CD4-positive, alpha-beta T cell (primary cell): ENCODE measurements at regions of chr3 and their contacts with region 1.

Region 1: DNA sequence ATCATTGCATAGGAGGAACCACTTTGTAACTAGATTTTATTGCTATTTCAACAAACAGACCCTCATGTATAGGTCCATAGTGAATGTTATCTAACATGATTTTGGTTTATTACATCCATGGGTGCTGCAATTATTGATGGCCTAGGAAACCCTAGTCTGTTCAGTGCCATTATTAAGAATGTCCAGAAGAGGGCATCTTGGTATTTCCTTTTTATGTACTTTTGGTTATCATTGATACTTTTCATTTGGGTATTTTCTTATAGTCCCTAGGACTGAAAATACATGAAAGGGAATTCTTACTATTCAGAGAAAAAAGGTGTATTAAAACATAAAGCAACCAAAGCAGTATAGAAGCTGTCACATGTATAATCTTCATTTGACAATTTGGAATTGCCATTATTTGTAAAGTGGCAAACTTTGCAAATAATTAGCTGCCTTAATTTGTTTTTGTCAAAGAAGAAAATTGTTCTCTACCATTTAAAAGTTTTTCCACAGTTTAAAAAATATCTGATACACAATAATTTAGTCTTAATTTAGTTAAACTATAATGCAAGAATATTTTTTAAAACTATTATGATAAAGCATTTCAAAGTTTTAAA is 48.7 kb downstream of the CNOT10 start:
- DNase-seq: peak in 3 of 14 experiments; percentile 34 to 40 (median 39)
- ATAC-seq: no peak
- H3K4me3 ChIP-seq: no peak overlapping the region
- H3K4me3 Mint-ChIP-seq: no peak overlapping the region
- H3K27ac ChIP-seq: no peak overlapping the region
- H3K27ac Mint-ChIP-seq: no peak overlapping the region
- H3K4me1 ChIP-seq: no peaks in the 10 kb centered on the region
- H3K4me1 Mint-ChIP-seq: no peaks in the 10 kb centered on the region
- H3K27me3 ChIP-seq: no peaks in the 10 kb centered on the region
- H3K27me3 Mint-ChIP-seq: no peaks in the 10 kb centered on the region
- CTCF ChIP-seq: peak; percentile 47

Region 2: DNA sequence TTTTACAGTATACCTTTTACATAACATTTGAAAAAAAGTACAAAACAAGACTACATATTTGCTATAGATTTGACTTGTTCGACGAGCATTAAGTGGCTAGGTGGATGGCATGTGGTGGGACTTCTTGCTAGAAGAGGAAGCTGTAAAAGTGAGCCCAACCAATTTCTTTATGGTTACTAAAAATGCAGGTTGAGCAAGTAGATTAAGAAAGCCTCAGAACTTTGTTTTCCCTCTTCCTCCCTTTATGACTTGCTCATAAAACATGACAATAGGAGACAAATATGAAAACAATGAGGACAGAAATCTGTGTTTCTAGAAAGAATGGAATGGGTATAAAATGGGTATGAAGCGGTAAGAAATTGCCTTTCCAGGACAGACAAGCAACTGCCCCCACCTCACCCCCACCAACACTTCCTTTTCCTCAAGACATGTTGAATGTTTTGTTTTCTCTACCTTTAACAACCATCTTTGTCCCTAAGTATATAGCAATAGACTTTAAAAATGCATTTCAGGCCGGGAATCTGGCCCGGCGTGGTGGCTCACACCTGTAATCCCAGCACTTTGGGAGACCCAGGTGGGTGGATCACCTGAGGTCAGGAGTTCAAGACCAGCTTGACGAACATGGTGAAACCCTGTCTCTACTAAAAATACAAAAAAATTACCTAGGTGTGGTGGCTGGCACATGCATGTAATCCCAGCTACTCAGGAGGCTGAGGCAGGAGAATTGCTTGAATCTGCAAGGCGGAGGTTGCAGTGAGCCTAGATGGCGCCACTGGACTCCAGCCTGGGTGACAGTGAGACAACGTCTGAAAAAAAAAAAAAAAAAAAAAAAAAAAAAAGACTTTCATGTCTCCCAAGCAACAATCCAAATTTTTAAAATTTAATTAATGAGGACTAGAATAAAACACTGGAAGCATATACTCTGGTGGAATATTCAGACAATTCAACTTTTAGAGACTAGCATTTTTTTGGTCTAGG is 168.0 kb after region 1 on chr3:
- CTCF ChIA-PET with region 1: no interaction called
- POLR2A ChIA-PET with region 1: no interaction called
- intact Hi-C with region 1: loop called in 1 of 2 experiments (anchors 10 kb)
- DNase-seq: peak in 12 of 14 experiments; percentile 5 to 56 (median 24)
- ATAC-seq: no peak
- H3K4me3 ChIP-seq: peak overlapping the region; percentile 26
- H3K4me3 Mint-ChIP-seq: peak overlapping the region; percentile 31
- H3K27ac ChIP-seq: no peak overlapping the region
- H3K27ac Mint-ChIP-seq: no peak overlapping the region
- H3K4me1 ChIP-seq: no peaks in the 10 kb centered on the region
- H3K4me1 Mint-ChIP-seq: no peaks in the 10 kb centered on the region
- H3K27me3 ChIP-seq: no peaks in the 10 kb centered on the region
- H3K27me3 Mint-ChIP-seq: peaks cover 24% of the 10 kb centered on the region
- CTCF ChIP-seq: peak; percentile 51

Region 3: DNA sequence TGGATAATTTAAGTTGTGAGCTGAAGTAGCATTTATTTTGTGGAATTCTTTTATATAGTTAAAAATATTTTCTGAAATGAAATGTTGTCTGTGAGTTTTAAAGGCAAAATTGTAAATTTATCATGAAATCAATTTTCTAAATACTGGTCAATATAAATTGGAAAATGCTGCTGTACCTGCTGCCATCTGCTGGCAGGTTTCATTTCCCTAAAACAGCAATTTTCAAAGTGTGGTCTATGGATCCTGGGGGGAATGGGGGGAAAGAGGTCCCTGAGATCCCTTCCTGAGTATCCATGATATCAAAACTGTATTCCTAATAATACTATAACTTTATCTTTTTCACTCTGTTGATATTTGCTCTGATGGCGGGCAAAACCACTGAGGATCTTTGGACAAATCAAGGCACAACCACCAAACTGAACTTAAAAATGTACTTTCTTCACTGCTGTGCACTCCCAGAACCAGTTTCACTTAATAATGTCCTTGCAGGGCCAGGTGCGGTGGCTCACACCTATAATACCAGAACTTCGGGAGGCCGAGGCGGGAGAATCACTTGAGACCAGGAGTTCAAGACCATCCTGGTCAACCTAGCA is 200.5 kb after region 1 on chr3:
- CTCF ChIA-PET with region 1: no interaction called
- POLR2A ChIA-PET with region 1: no interaction called
- intact Hi-C with region 1: loop called (anchors 2 to 10 kb)
- DNase-seq: peak in 4 of 14 experiments; percentile 23 to 51 (median 42)
- ATAC-seq: no peak
- H3K4me3 ChIP-seq: no peak overlapping the region
- H3K4me3 Mint-ChIP-seq: no peak overlapping the region
- H3K27ac ChIP-seq: no peak overlapping the region
- H3K27ac Mint-ChIP-seq: no peak overlapping the region
- H3K4me1 ChIP-seq: no peaks in the 10 kb centered on the region
- H3K4me1 Mint-ChIP-seq: no peaks in the 10 kb centered on the region
- H3K27me3 ChIP-seq: peaks cover 0 to 4% of the 10 kb centered on the region in 2 experiments
- H3K27me3 Mint-ChIP-seq: peaks cover 16% of the 10 kb centered on the region
- CTCF ChIP-seq: peak; percentile 70

Region 4: GRCh38 chr3:33149342-33149741 is 415.6 kb after region 1 on chr3:
- CTCF ChIA-PET with region 1: no interaction called
- POLR2A ChIA-PET with region 1: no interaction called
- intact Hi-C with region 1: no loop called
- DNase-seq: peak in 1 of 14 experiments; percentile 22
- ATAC-seq: no peak
- H3K4me3 ChIP-seq: no peak overlapping the region
- H3K4me3 Mint-ChIP-seq: no peak overlapping the region
- H3K27ac ChIP-seq: no peak overlapping the region
- H3K27ac Mint-ChIP-seq: no peak overlapping the region
- H3K4me1 ChIP-seq: no peaks in the 10 kb centered on the region
- H3K4me1 Mint-ChIP-seq: no peaks in the 10 kb centered on the region
- H3K27me3 ChIP-seq: peaks cover 0 to 6% of the 10 kb centered on the region in 2 experiments
- H3K27me3 Mint-ChIP-seq: peaks cover 15% of the 10 kb centered on the region
- CTCF ChIP-seq: no peak

Region 5: GRCh38 chr3:33372218-33373081 is 638.7 kb after region 1 on chr3:
- CTCF ChIA-PET with region 1: no interaction called
- POLR2A ChIA-PET with region 1: no interaction called
- intact Hi-C with region 1: loop called in 1 of 2 experiments (anchors 10 kb)
- DNase-seq: peak; percentile 6 to 67 (median 28)
- ATAC-seq: peak; percentile 75
- H3K4me3 ChIP-seq: no peak overlapping the region
- H3K4me3 Mint-ChIP-seq: no peak overlapping the region
- H3K27ac ChIP-seq: no peak overlapping the region
- H3K27ac Mint-ChIP-seq: no peak overlapping the region
- H3K4me1 ChIP-seq: peaks cover 5% of the 10 kb centered on the region
- H3K4me1 Mint-ChIP-seq: peaks cover 5% of the 10 kb centered on the region
- H3K27me3 ChIP-seq: no peaks in the 10 kb centered on the region
- H3K27me3 Mint-ChIP-seq: peaks cover 16% of the 10 kb centered on the region
- CTCF ChIP-seq: peak; percentile 91